Calu3 (cell line): ENCODE measurements at regions of chr1 and their contacts with region 1.

Region 1: DNA sequence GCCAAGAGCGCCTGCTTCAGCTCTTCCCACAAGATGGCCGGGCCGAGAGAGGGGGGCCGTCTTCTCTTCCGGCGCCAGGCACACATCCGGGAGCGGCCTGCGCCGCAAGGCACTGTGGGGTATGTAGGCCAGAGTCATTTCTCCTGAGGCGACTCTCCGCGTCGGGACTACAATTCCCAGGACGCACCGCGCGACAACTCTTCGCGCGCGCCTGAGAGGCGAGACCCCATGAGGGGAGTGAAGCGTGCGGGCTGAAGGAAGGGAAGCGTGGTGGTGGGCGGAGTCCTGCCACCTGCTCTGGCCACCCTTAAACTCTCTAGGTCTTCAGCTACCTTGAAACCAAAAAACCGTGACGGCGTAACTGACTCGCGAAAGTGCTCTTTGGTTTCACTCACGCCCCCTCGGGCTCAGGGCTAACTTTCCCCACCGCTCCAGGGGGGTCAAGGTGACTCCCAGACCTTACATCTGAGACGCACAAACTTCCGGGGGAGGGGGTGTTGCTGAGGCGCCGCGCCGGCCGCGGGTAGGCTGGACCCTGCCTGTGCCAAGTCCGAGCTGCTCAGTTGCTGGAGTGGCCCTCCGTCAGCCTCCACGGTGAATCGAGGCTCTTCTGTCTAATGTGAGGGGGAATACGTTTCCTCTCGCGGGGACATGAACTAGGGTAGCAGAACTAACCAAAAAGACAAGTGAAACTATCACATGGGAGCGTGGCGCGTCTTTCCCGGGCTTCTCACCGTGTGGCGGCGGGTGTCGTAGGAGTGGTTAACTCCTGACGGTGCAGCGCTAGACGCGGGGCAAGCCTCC is at the start of gene SERBP1:
- DNase-seq: peak; percentile 95
- H3K4me3 Mint-ChIP-seq: peak within 1 kb of the TSS; percentile 98
- H3K27ac Mint-ChIP-seq: peak within 1 kb of the TSS; percentile 96
- H3K4me1 Mint-ChIP-seq: peaks cover 20% of the 10 kb centered on the region
- H3K27me3 Mint-ChIP-seq: no peaks in the 10 kb centered on the region
- CTCF ChIP-seq: no peak
- total RNA-seq, gene SERBP1: 216 and 226 TPM in 2 replicates

Region 2: DNA sequence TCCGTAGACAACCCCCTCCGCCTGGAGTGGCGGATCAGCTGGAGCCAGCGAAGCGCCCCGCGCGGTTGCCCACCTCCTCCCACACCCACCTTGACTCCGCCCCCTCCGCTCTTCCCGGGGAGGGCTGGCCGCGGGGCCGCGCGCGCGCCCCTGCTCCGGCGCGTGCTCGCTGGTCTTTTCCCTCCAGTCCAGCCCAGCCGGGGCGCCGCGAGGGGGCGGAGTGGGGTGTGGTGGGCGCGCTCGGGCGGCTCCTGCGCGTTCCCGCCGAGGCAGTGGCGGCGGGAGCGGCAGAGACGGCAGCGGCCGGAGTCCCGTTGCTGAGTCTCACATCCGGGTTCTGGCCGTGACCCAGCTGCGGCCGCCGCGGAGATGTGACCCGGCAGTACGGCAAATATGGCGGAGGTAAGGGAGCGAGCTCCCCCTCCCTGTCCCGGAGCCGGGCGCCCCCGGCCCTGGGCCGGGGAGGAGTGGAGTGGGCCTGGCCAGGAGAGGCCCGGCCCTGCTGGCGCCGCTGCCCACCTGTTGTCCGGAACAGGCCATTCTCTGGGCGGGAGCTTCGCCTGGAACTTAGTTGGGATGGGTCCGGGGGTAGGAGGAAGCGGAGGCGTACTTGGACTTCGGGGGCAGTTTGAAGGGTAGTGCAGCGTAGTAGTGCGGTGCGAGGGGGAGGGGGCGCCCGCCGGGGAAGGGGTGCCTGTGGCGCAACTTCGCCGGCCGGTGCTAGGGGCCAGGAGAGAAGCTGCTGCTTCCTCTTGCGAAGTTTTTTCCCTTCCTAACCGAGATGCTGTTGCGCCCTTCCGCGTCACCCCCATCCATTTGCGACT is 500.3 kb before region 1 on chr1:
- CTCF ChIA-PET with region 1: no interaction called
- intact Hi-C with region 1: loop called (anchors 10 kb)
- DNase-seq: peak; percentile 98
- H3K4me3 Mint-ChIP-seq: peak overlapping the region; percentile 77
- H3K27ac Mint-ChIP-seq: peak overlapping the region; percentile 85
- H3K4me1 Mint-ChIP-seq: no peaks in the 10 kb centered on the region
- H3K27me3 Mint-ChIP-seq: no peaks in the 10 kb centered on the region
- CTCF ChIP-seq: peak; percentile 28

Region 3: GRCh38 chr1:67414574-67414973 is 16.0 kb before region 1 on chr1:
- CTCF ChIA-PET with region 1: interaction called, 4 read pairs
- intact Hi-C with region 1: loop called (anchors 2 kb)
- DNase-seq: no peak
- H3K4me3 Mint-ChIP-seq: no peak overlapping the region
- H3K27ac Mint-ChIP-seq: no peak overlapping the region
- H3K4me1 Mint-ChIP-seq: peaks cover 10% of the 10 kb centered on the region
- H3K27me3 Mint-ChIP-seq: no peaks in the 10 kb centered on the region
- CTCF ChIP-seq: no peak

Region 4: DNA sequence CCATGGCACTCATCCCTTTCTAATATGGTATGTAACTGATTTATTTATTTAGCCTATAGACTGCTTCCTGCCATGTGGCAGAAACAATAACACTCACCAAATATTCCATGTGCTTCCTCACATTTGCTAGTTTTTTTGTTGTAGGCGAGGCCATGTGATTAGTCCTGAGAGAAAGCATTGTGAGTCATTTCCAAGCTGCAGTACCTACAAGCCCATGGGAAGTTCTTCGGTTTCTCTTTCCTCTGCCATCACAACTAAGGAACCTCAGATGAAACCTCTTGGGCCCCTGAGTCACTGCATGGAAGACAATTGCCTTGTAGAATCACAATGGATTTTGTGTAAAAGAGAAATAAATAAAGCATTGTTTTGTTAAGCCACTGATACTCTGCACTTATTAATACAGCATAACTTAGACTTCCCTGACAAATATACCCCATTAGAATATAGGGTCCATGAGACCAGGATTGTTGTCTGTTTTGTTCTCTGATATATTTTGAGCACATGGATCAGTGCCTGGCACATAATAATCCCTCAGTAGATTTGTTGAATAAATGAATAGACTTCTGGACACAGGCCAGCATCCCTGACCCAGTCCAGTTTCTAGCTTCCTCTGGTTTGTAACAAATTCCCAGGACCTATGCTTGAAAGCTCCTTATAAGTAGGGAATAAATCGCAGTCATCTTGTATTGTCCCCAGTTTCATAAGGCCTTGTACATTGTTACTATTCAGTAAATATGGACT is 196.1 kb after region 1 on chr1:
- CTCF ChIA-PET with region 1: no interaction called
- intact Hi-C with region 1: no loop called
- DNase-seq: peak; percentile 11
- H3K4me3 Mint-ChIP-seq: no peak overlapping the region
- H3K27ac Mint-ChIP-seq: peak overlapping the region; percentile 62
- H3K4me1 Mint-ChIP-seq: peaks cover 44% of the 10 kb centered on the region
- H3K27me3 Mint-ChIP-seq: no peaks in the 10 kb centered on the region
- CTCF ChIP-seq: no peak